IMR-90 (cell line): ENCODE measurements at regions of chr12 and their contacts with region 1.

Region 1: DNA sequence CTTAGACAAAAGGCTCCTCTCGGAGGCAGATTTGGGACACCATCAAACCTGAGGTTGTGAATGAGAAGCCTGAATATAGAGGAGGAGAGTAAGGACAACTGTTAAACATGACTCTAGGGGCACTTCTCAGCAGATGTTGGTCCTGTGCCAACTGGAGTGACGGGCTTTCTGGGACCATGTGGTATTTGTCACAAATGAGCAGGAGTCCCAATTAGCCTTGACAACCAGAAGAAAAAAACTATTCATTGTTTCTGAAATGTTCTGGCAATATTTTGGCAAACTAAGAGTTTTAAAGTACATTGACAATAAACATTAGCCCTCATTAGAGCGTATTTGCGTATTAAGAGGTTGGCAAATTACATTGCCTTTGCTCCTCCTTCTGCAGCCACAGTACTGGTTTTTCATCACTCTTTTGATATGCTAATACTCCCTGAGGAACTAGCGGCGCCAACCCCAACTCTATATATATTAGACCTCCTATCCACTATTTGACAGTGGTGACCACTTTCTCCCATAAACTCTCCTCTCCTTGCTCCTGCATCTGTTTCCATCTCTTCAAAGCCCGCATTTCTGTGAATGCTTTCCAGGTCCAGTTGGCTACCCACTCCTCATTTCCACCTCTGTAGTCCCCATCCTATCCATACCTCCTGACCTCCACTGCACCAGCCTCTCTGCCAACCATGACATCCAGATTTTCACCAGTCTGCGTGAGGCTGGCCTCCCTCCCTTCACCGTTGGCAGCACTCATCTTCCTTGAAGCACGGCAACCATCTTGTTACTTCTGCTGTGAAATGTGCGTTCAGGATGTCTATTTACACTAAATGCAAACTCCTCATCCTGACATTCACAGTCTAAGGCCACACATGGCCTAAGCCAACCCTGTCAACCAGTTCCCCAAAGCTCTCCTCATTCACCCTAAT is 100.7 kb downstream of the ZFC3H1 start:
- DNase-seq: no peak
- ATAC-seq: no peak
- H3K4me3 ChIP-seq: no peak overlapping the region
- H3K27ac ChIP-seq: no peak overlapping the region
- H3K4me1 ChIP-seq: peaks cover 2% of the 10 kb centered on the region
- H3K27me3 ChIP-seq: peaks cover 4% of the 10 kb centered on the region; the same call in 1 of the 2 replicates
- CTCF ChIP-seq: no peak
- POLR2A ChIP-seq: no peak
- RAD21 ChIP-seq: no peak

Region 2: DNA sequence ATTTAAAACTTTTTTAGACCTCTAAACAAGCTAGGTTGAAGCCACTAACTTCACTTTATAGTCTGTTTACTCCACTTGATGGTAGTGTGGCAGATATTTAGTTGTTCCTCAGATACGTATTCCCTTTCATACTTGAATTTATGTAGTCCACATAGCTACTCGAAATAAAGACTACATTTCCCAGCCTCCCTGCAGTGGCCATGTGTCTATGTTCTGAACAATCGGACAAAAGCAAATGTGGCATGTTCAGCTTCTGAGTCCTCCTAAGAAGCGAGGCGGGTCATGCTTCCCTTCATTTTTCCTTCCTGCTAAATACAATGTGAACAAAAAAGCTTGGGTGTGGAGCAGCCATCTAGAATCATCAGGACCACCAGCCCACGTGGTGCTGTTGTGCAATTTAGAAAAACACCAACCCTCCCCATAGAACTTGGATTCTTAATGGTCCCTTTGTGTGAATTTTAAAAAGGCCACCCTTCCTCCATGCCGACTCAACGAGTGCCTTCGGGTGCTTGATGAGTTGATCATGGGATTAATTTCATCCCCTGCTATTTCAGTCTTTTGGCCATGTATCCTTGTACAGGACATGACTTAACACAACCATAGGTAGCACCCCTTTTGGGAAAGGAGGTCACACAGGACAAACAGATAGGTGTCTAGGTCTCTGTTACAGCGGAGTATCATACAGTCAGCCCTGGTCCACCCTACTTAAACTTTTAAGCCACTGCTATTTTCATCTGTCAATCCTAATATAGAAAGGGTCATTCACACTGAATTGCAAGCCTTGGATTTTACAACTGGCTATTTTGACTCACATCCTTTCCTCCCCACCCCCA is 40.0 kb after region 1 on chr12:
- CTCF ChIA-PET with region 1: no interaction called
- POLR2A ChIA-PET with region 1: no interaction called
- dilution Hi-C with region 1: no loop called
- in situ Hi-C with region 1: no loop called
- intact Hi-C with region 1: loop called (anchors 5 kb)
- DNase-seq: no peak
- ATAC-seq: no peak
- H3K4me3 ChIP-seq: no peak overlapping the region
- H3K27ac ChIP-seq: no peak overlapping the region
- H3K4me1 ChIP-seq: no peaks in the 10 kb centered on the region
- H3K27me3 ChIP-seq: no peaks in the 10 kb centered on the region
- CTCF ChIP-seq: no peak
- POLR2A ChIP-seq: no peak
- RAD21 ChIP-seq: no peak